AG04449 (cell line): ENCODE measurements at regions of chr10 and their contacts with region 1.

Region 1: DNA sequence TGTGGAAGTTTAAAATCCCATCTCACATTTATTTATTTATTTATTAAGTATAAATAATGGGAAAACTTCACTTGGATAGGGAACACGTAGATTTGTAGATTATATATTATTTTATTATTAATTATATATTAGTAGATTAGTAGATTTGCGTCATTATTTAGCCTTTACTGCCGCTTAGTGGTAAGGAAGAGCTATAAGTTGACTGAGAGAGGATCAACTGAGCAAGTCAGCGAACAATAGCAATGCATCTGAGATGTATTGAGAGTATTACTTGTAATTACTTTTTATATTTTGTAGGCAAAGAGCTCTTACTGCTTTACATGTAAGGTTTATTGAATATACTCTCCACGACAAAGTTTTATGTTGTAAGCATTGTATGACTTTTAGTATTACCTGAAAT is 244.5 kb upstream of the ANKRD30A start:
- DNase-seq: no peak
- H3K4me3 ChIP-seq: no peak overlapping the region
- CTCF ChIP-seq: peak; percentile 33

Region 2: DNA sequence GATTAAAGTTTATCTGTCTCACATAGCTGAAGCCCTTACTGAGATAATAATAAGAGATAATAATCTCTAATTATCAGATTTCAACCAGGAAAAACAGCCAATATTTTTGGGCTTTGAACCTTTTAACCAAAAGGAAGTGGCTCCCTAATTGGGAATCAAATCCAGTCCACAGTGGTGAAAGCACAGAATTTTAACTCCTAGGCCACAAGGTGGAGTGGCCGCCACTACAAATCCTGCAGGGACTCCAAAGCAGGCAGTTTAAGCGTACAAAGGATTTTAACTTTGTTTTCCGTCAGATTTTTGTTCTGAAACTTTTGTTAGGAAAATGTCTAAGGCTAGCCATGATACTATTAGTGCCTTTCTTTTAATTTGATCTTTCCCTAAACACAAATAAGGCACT is 1644.2 kb before region 1 on chr10:
- CTCF ChIA-PET with region 1: interaction called, 12 read pairs
- POLR2A ChIA-PET with region 1: no interaction called
- DNase-seq: no peak
- H3K4me3 ChIP-seq: no peak overlapping the region
- CTCF ChIP-seq: peak; percentile 16

Region 3: DNA sequence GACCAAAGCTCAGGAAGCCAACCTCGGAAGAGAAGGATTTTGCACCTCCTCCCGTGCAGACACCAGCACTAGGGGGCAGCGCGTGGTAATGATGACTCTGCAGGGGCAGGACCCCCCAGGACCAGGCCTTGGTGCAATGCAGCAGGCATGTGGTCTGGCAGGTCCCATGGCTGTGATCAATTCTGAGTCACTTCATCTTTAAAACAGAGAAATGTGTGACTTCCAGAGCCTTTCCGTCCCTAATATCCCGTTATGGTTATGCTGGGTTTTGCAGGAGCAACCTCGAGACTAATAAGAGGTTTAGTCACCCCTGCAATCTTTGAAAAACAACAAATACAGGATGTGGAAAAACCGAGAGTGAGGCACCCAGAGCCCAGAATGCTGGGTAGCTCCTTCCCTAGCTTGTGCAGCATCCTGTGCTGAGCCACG is 1306.0 kb before region 1 on chr10:
- CTCF ChIA-PET with region 1: interaction called, 14 read pairs
- POLR2A ChIA-PET with region 1: interaction called, 4 read pairs
- DNase-seq: peak; percentile 86
- H3K4me3 ChIP-seq: no peak overlapping the region
- CTCF ChIP-seq: peak; percentile 57

Region 4: DNA sequence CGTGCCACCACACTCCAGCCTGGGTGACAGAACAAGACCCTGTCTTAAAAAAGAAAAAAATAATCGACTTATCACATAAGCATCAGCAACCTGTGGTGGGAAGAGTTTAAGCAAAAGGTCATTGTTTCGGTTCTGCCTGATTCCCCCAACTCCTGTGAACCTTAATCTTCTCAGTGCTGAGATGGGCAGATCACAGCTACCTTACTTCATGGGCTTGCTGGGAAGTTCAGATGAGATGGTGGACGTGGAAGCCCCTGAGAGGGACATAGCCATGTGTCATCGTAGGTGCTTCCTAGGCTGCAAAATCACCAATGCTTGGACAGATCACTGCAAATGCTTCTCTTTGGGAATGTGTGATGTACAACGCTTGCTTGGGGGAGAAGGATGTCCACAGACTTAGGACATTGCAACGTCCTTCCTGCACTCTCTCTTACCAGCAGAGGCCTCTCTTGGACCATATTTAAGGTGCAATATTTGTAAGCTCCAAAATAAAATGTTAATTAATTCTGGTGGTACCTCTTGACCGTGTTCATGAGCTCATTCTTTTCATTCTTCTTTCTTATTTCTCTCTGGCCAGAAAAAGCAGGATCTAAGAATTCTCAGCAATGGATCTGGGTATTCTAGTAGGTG is 1267.2 kb before region 1 on chr10:
- CTCF ChIA-PET with region 1: interaction called, 72 read pairs
- POLR2A ChIA-PET with region 1: no interaction called
- DNase-seq: no peak
- H3K4me3 ChIP-seq: no peak overlapping the region
- CTCF ChIP-seq: peak; percentile 47